ENCODE measurements at regions of chr19 and their contacts with region 1.

Region 1: GRCh38 chr19:12766051-12766521 is 9.3 kb downstream of the HOOK2 start:
- DNase-seq: peak; percentile 94
- ATAC-seq: peak; percentile 83
- H3K4me3 Mint-ChIP-seq: peak overlapping the region; percentile 17
- H3K27ac Mint-ChIP-seq: no peak overlapping the region
- H3K4me1 Mint-ChIP-seq: peaks cover 10% of the 10 kb centered on the region
- H3K27me3 Mint-ChIP-seq: no peaks in the 10 kb centered on the region

Region 2: DNA sequence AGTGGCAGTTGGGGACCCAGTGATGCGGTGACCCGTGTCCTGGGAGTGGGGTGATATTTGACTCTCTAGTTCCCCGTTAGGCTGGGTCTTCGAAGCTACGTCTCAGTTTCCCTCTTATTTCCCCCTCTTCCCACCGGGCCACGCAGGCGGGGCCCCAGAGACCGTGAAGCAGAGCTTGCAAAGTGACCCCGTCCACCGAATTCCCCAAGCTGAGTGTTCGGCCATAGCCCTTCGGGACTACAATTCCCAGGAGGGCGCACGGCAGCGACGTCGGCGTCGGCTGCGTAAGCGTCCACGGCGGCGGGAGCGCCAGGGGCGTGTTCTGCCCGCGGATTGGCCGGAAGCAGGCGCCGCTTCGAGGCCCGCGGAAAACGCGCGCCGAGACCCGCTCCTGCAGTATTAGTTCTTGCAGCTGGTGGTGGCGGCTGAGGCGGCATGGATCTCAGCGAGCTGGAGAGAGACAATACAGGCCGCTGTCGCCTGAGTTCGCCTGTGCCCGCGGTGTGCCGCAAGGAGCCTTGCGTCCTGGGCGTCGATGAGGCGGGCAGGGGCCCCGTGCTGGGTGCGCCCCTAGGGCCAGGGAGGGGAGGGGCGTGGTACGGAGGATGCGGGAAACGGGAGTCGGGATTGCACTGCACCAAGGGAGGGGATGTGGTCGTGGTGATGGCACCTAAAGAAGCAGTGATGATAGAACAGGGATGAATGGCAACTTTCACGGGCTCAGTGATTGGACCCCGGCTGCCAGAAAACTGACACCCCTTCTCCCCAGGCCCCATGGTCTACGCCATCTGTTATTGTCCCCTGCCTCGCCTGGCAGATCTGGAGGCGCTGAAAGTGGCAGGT is 40.4 kb after region 1 on chr19 and contains the start of gene RNASEH2A:
- CTCF ChIA-PET with region 1: interaction called, 451 read pairs
- POLR2A ChIA-PET with region 1: no interaction called
- intact Hi-C with region 1: no loop called
- DNase-seq: peak; percentile 94
- ATAC-seq: peak; percentile 93
- H3K4me3 Mint-ChIP-seq: peak within 1 kb of the TSS; percentile 89
- H3K27ac Mint-ChIP-seq: peak within 1 kb of the TSS; percentile 80
- H3K4me1 Mint-ChIP-seq: peaks cover 24% of the 10 kb centered on the region
- H3K27me3 Mint-ChIP-seq: no peaks in the 10 kb centered on the region
- total RNA-seq, gene RNASEH2A: 27.0 to 51.1 TPM

Measured in activated CD4-positive, alpha-beta T cell treated with anti-CD3 and anti-CD28 coated beads for 36 hours (primary cell).